Heart left ventricle (tissue), 16 donors: ENCODE measurements at regions of chr18 and their contacts with region 1.

Region 1: DNA sequence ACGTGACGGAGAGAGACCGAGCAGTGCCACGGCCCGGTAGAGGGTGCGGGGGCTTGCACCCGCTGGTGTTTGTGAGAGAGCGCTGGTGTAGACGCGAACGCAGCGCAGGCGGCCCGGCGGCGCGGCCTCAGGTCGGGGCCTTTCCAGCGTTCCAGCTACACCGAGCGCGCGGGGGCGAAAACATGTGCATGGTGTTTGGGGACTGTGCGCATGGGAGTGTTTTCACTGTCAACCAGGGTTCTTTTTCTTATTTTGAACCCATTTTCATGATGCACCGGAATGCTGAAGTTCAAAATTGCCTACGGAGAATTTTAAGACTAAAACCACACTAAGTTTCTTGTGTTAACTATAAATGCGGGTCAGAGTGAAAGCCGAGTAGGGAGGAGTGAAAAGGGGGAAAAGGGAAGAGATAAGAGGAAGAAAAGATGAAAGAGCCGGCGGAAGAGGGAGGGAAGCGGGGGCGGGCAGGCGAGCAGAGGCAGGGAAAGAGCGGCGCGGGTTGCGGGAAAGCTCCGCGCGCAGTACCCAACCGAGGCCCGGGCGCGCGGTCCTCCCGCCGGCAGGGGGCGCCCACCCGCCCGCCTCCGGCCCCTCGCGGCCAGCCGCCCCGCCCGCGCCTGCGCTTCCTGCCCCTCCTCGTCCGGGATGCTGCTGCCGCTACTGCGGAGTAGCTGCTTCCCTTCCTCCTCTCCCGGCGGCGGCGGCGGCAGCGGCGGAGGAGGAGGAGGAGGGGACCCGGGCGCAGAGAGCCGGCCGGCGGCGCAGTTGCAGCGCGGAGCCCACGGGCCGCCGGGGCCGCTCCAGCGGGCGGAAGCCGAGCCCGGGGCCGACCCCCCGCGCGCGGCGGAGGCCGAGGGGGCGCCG is at the start of gene RAB12:
- DNase-seq: peak; percentile 91 to 95 (median 92)
- ATAC-seq: peak; percentile 71 to 94 (median 90)
- H3K4me3 ChIP-seq: peak within 1 kb of the TSS; percentile 53 to 97 (median 88)
- H3K27ac ChIP-seq: peak within 1 kb of the TSS; percentile 69 to 89 (median 83)
- H3K4me1 ChIP-seq: peaks cover 6 to 54% (median 37%) of the 10 kb centered on the region in 12 donors
- H3K27me3 ChIP-seq: no peaks in the 10 kb centered on the region
- CTCF ChIP-seq: peak; percentile 28 to 94 (median 72)
- POLR2A ChIP-seq: peak in 1 of 2 donors; percentile 33
- total RNA-seq, gene RAB12: 66.5 to 123 (median 100) TPM

Region 2: GRCh38 chr18:8455661-8456614 is 153.1 kb before region 1 on chr18:
- intact Hi-C with region 1: no loop called
- DNase-seq: no peak
- ATAC-seq: no peak
- H3K4me3 ChIP-seq: no peak overlapping the region
- H3K27ac ChIP-seq: no peak overlapping the region
- H3K4me1 ChIP-seq: peaks cover 0 to 17% (median 3%) of the 10 kb centered on the region in 12 donors
- H3K27me3 ChIP-seq: no peaks in the 10 kb centered on the region
- CTCF ChIP-seq: no peak
- POLR2A ChIP-seq: no peak

Region 3: DNA sequence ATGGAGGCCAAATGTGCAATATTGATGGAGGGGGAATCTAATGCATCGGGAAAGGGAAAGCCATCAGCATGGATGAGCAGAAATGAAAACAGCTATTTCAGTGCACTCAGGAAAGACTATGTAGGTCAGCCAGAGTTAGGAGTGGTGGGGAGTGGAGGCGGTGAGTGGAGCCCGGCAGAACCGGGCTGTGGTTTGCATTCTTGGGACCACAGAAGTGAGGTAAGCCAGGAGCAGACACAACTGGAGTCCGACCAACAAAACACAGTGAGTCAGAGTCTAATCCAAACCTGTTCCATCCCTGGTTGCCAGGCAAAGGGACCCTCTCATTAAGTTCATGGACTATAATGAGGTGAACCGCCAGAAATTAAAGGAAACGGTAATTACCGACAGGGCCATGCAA is 60.8 kb before region 1 on chr18:
- intact Hi-C with region 1: loop called in 1 of 10 experiments (anchors 10 kb)
- DNase-seq: no peak
- ATAC-seq: no peak
- H3K4me3 ChIP-seq: no peak overlapping the region
- H3K27ac ChIP-seq: no peak overlapping the region
- H3K4me1 ChIP-seq: no peaks in the 10 kb centered on the region
- H3K27me3 ChIP-seq: no peaks in the 10 kb centered on the region
- CTCF ChIP-seq: no peak
- POLR2A ChIP-seq: no peak

Region 4: DNA sequence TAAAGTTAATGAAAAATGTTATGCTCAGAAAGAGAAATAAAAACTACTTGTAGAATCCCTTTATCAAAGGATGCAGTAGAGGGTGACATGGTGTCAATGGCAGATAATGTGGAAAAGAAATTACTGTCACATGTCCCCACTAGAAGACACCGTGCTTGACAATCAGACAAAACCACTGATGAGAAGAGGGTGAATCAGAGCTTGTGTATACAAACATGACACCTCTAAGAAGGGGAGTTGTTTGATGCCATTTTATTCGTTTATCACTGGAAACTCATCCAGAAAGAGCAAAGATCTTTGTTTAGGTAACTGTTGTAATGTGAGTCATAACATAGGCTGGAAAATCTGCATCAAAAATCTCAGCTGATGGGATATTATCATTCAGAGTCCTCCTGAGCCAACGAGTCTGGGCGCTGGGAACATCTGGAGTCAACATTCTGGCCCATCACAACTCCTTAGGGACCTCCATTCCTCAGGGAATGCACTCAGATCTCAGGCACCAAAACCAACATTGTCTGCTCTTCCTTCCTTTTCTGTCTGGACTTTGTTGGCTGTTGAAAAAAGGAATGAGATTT is 49.3 kb before region 1 on chr18:
- intact Hi-C with region 1: loop called in 1 of 10 experiments (anchors 5 kb)
- DNase-seq: no peak
- ATAC-seq: no peak
- H3K4me3 ChIP-seq: no peak overlapping the region
- H3K27ac ChIP-seq: no peak overlapping the region
- H3K4me1 ChIP-seq: peaks cover 0 to 25% (median 9%) of the 10 kb centered on the region in 12 donors
- H3K27me3 ChIP-seq: no peaks in the 10 kb centered on the region
- CTCF ChIP-seq: no peak
- POLR2A ChIP-seq: no peak